Activated B cell treated with CpG ODN at 0.5 μM for 24 hours (primary cell): ENCODE measurements at regions of chr2 and their contacts with region 1.

Region 1: GRCh38 chr2:222318026-222318711 is 19.4 kb upstream of the PAX3 start:
- DNase-seq: peak; percentile 55
- ATAC-seq: peak; percentile 59
- H3K4me3 Mint-ChIP-seq: peak overlapping the region; percentile 83
- H3K27ac Mint-ChIP-seq: no peak overlapping the region
- H3K4me1 Mint-ChIP-seq: peaks cover 11% of the 10 kb centered on the region
- H3K27me3 Mint-ChIP-seq: peaks cover 49% of the 10 kb centered on the region
- CTCF ChIP-seq: no peak

Region 2: GRCh38 chr2:222057347-222058073 is 260.7 kb before region 1 on chr2:
- CTCF ChIA-PET with region 1: interaction called, 3 read pairs
- POLR2A ChIA-PET with region 1: no interaction called
- intact Hi-C with region 1: loop called (anchors 1 kb)
- DNase-seq: no peak
- ATAC-seq: no peak
- H3K4me3 Mint-ChIP-seq: no peak overlapping the region
- H3K27ac Mint-ChIP-seq: no peak overlapping the region
- H3K4me1 Mint-ChIP-seq: no peaks in the 10 kb centered on the region
- H3K27me3 Mint-ChIP-seq: peaks cover 14% of the 10 kb centered on the region
- CTCF ChIP-seq: no peak

Region 3: GRCh38 chr2:222242532-222242931 is 75.6 kb before region 1 on chr2:
- CTCF ChIA-PET with region 1: no interaction called
- POLR2A ChIA-PET with region 1: no interaction called
- intact Hi-C with region 1: no loop called
- DNase-seq: no peak
- ATAC-seq: no peak
- H3K4me3 Mint-ChIP-seq: no peak overlapping the region
- H3K27ac Mint-ChIP-seq: no peak overlapping the region
- H3K4me1 Mint-ChIP-seq: no peaks in the 10 kb centered on the region
- H3K27me3 Mint-ChIP-seq: peaks cover 34% of the 10 kb centered on the region
- CTCF ChIP-seq: no peak

Region 4: DNA sequence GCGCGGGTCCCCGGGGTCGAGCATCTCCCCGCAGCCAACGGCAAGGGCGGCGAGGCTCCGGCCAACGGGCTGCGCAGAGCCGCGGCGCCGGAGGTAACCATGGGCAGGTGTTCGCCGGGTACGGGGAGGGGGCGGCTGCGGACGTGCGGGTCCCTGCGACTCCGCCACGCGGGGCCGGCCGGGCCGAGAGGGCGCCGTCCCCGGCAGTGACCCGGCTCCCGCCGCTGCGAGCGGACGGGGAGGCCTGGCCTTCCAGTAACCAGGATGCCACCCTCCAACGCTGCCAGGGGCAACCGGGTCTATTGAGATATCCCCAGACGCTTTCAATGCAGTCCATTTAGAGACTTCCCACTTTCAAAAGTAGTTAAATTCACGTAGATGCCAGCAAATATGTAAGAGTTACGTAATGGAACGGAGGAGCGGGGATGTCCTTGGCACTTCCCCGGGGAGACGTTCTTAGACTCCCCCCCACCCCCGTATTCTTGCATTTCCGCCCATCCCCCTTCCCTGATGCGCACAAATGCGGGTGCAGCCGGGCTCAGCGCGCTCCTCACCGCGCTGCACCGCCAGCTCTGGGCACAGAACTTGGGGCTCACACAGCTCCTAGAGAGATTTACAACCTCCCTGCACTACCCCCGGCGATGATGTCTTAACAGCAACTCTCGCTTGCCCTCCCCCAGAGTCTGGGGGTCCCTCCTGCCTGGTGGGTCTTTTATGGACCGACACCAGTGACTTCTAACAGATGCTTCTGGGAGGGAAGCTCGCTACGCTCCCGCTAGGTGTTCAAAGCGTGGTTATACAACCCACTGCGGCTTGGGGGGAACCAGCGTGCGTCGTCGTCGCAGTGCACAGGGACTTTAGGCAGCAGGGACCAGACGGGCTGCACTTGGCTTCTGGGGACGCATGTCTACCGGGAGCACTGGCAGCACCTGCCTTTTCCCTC is 106.8 kb after region 1 on chr2:
- CTCF ChIA-PET with region 1: no interaction called
- POLR2A ChIA-PET with region 1: interaction called, 5 read pairs
- intact Hi-C with region 1: loop called (anchors 1 kb)
- DNase-seq: peak; percentile 32
- ATAC-seq: peak; percentile 42
- H3K4me3 Mint-ChIP-seq: peak overlapping the region; percentile 90
- H3K27ac Mint-ChIP-seq: peak overlapping the region; percentile 81
- H3K4me1 Mint-ChIP-seq: peaks cover 47% of the 10 kb centered on the region
- H3K27me3 Mint-ChIP-seq: peaks cover 23% of the 10 kb centered on the region
- CTCF ChIP-seq: no peak

Region 5: DNA sequence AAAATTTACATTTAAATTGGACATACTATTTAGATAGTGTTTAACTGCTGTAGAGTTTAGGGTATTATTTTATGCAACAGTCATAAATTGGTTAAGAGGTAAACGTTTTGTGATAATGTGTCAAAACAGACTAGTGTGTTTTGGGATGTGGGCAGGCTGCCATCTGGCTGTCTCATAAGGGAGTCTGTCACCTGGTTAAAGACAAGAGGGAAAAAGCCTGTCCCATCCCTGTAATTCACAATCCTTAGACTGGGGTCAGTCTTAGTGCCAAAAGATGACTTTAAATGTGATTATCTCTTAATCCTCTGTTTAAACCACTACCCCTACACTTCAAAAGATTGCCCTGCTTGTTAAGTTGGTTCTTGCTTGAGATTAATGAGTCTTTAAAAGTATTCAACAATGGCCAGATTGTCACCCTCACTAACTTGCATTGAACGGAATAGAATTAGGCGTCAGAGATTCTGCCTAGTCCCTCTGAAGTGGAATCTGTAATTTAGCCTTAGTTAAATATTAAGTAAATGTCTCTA is 165.4 kb after region 1 on chr2:
- CTCF ChIA-PET with region 1: interaction called, 33 read pairs
- POLR2A ChIA-PET with region 1: interaction called, 6 read pairs
- intact Hi-C with region 1: loop called (anchors 1 kb)
- DNase-seq: no peak
- ATAC-seq: no peak
- H3K4me3 Mint-ChIP-seq: no peak overlapping the region
- H3K27ac Mint-ChIP-seq: no peak overlapping the region
- H3K4me1 Mint-ChIP-seq: no peaks in the 10 kb centered on the region
- H3K27me3 Mint-ChIP-seq: no peaks in the 10 kb centered on the region
- CTCF ChIP-seq: no peak

Region 6: DNA sequence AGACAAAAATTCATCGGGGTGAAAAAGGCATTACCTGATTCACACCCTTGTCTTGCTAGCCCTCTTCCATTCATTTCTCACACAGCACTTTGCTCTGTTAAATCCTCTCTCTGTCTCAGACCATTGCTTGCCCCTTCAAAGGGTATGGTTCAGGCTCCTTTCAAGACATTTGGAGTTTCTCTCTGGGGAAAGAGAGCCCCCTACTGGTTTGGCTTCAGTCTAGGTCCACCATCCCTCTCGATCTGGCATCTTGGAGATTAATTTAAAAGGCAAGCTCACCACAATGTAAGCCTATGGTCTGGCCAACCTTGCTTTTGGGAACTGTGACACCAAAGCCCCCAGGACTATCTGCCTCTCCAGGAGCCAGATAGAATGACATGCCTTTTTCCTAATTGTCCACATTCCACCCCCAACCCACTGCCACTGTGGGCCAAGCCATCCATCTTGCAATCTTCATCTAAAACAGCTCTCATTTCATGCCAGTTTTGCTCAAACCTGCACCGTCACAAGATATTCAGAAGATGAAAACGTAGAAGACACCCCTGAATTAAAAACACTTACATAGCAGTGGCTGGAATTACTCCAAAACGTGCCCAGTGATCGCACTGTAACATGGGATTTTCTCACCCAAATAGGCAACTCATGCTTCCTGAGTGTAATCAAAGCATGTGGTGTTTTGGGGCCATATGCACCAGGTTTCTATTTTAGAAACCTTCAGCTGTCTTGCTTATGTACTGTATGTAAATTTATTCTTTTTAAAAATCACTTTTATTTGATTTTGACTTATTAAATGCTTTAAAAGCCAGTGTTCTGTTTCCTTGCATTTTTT is 243.9 kb after region 1 on chr2:
- CTCF ChIA-PET with region 1: interaction called, 92 read pairs
- POLR2A ChIA-PET with region 1: no interaction called
- intact Hi-C with region 1: loop called (anchors 1 kb)
- DNase-seq: no peak
- ATAC-seq: peak; percentile 54
- H3K4me3 Mint-ChIP-seq: no peak overlapping the region
- H3K27ac Mint-ChIP-seq: no peak overlapping the region
- H3K4me1 Mint-ChIP-seq: no peaks in the 10 kb centered on the region
- H3K27me3 Mint-ChIP-seq: no peaks in the 10 kb centered on the region
- CTCF ChIP-seq: no peak

Region 7: DNA sequence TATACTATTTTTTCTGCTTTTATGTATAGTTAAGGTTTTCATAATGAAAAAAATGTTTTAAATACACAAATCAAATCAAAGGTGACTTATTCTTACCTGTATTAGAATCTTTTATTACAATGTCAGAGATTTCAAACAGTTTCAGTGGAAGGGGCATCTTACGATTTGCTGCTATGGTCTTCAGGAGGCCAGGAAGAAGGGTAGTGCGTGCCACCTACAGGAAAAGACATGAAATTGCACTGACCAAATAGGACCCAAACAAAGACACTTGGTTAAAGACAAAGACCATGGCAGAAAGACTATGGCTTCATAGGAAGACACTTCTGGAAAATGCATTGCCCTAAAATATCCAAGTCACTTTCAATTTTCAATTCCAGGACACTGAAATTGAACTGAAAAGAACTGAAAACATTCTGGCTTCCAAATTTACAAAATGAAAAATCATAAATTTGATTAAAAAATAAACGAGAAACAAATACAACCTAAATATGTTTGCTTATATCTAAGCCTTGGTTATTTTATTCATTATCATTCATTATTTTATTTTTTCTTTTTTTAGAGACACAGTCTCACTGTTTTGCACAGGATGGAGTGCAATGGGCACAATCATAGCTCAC is 295.7 kb after region 1 on chr2:
- CTCF ChIA-PET with region 1: interaction called, 16 read pairs
- POLR2A ChIA-PET with region 1: no interaction called
- intact Hi-C with region 1: loop called (anchors 1 kb)
- DNase-seq: no peak
- ATAC-seq: peak; percentile 82
- H3K4me3 Mint-ChIP-seq: no peak overlapping the region
- H3K27ac Mint-ChIP-seq: no peak overlapping the region
- H3K4me1 Mint-ChIP-seq: no peaks in the 10 kb centered on the region
- H3K27me3 Mint-ChIP-seq: no peaks in the 10 kb centered on the region
- CTCF ChIP-seq: peak; percentile 22

Region 8: DNA sequence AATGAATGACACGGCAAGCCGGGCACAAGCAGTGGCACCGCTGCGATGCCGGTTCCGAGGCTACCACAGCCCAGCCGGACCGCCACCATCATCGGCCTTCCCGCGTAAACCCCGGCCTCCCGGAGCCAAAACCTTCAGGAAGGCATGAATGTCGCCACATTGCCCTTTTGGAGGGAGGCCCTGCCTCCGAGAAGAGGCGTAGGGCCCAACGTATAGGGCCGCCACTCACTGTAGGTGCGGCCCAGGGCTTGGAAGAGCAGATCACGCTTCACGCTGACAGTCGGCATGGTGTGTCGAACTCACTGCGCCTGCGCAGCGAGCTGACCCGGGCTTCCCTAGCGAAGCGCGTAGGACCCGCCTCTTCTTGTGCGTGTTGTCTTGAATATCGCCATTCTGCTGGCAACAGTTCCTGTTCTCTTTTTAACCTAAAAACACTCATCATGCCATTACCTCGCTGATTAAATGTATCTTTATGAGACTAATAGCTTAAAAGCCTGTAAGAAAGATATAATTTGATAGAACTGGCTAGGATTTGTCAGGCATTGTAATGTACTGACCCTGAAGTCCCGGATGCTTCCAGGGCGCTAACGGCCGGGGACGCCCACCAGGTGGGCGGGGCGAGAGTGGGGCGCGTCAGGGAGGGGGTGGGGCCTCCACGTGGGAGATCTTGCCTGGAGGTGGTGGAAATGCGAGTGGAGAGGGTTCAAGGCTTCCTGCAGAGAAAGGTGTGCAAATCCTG is 337.8 kb after region 1 on chr2 and contains the start of gene FARSB:
- CTCF ChIA-PET with region 1: no interaction called
- POLR2A ChIA-PET with region 1: no interaction called
- intact Hi-C with region 1: loop called (anchors 1 kb)
- DNase-seq: peak; percentile 81
- ATAC-seq: peak; percentile 93
- H3K4me3 Mint-ChIP-seq: peak within 1 kb of the TSS; percentile 97
- H3K27ac Mint-ChIP-seq: peak within 1 kb of the TSS; percentile 99
- H3K4me1 Mint-ChIP-seq: peaks cover 47% of the 10 kb centered on the region
- H3K27me3 Mint-ChIP-seq: no peaks in the 10 kb centered on the region
- CTCF ChIP-seq: no peak
- total RNA-seq, gene FARSB: 21.6 and 23.3 TPM in 2 replicates

Region 9: GRCh38 chr2:222690564-222691200 is 372.5 kb after region 1 on chr2:
- CTCF ChIA-PET with region 1: no interaction called
- POLR2A ChIA-PET with region 1: no interaction called
- intact Hi-C with region 1: no loop called
- DNase-seq: peak; percentile 50
- ATAC-seq: peak; percentile 99
- H3K4me3 Mint-ChIP-seq: no peak overlapping the region
- H3K27ac Mint-ChIP-seq: no peak overlapping the region
- H3K4me1 Mint-ChIP-seq: peaks cover 4% of the 10 kb centered on the region
- H3K27me3 Mint-ChIP-seq: peaks cover 10% of the 10 kb centered on the region
- CTCF ChIP-seq: peak; percentile 94